ENCODE measurements at regions of chr14 and their contacts with region 1.

Region 1: DNA sequence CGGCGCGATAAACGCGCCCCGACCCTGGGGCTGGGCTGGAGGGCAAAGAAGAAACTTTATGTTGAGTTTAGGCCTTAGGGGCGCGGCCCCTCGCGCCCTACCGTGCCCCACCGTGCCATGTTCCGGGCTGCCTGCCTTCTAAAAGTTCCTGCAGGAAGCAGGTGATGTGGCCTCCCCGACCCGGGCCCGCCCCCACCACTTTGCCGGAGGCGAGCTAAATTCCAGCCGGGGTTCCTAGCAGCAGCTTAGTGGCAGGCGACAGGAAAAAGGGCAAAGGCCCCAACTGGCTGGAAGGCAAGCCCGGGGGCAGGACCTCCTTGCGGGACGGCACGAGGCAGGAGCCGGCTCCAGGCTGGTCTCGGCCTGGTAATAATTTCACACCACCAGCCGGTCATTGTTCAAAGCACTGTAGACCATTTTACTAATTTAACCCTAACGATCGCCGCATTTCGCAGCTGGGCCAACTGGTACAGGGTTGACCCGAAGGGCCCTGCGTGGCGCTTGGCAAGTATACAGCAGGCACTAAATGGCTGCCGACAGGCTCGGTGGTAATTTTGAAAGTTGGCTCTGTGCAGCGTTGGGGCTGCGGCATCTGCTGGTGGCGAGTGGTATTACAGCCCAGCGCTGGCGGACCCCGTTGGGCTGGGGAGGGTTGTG is 895 bp upstream of the CCDC88C start:
- DNase-seq: peak; percentile 84
- H3K4me3 Mint-ChIP-seq: peak overlapping the region; percentile 72
- H3K27ac Mint-ChIP-seq: peak overlapping the region; percentile 73
- H3K4me1 Mint-ChIP-seq: peaks cover 29% of the 10 kb centered on the region
- H3K27me3 Mint-ChIP-seq: peaks cover 8% of the 10 kb centered on the region

Region 2: DNA sequence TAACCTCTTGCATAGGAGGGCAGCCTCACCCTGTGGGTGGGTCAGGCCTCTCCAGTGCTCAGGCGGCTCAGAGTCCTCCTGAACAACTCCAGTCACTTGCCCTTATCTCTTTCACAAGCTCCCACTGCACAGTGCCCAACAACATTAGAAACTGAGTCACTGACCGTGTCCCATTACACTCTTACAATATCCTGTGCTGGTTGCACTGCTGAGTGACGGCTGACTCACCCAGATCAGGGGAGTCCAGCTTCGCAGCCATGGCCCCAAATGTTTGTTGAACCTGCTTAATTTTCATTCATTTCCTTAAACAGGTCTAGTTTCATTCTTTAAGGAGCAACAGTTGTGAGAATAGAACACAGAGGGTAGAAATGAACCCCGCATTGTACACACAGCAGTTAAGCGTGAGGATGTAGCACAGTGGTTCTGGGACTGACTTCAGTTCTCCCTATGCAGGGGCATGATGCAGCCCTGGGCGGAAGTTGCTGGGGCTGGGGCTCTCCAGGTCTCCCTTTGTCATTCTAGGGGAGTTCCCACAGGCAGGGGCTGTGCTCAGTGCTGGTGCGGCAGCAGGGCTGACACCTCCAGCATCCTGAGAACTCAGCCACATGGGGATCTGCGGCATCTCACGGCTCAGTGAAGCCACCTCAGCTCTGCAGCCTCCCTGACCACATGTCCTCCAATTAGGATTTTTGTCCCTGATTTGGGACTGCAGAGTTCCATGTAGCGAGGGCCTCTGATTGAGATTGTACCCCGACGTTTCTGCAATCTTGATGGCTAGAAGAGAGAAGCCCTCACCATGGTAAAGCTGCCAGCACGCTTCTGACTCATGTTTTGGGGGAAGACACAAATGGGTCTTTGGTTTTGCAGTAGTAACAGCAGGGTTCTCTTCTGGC is 190.2 kb before region 1 on chr14:
- CTCF ChIA-PET with region 1: no interaction called
- POLR2A ChIA-PET with region 1: interaction called, 11 read pairs
- DNase-seq: peak; percentile 88
- H3K4me3 Mint-ChIP-seq: peak overlapping the region; percentile 62
- H3K27ac Mint-ChIP-seq: peak overlapping the region; percentile 100
- H3K4me1 Mint-ChIP-seq: peaks cover 91% of the 10 kb centered on the region
- H3K27me3 Mint-ChIP-seq: no peaks in the 10 kb centered on the region

Region 3: GRCh38 chr14:91323671-91324605 is 94.6 kb before region 1 on chr14:
- CTCF ChIA-PET with region 1: interaction called, 105 read pairs
- POLR2A ChIA-PET with region 1: interaction called, 65 read pairs
- DNase-seq: peak; percentile 92
- H3K4me3 Mint-ChIP-seq: peak overlapping the region; percentile 76
- H3K27ac Mint-ChIP-seq: peak overlapping the region; percentile 99
- H3K4me1 Mint-ChIP-seq: peaks cover 64% of the 10 kb centered on the region
- H3K27me3 Mint-ChIP-seq: no peaks in the 10 kb centered on the region

Region 4: GRCh38 chr14:91367173-91368171 is 51.0 kb before region 1 on chr14:
- CTCF ChIA-PET with region 1: interaction called, 18 read pairs
- POLR2A ChIA-PET with region 1: interaction called, 135 read pairs
- DNase-seq: peak; percentile 63
- H3K4me3 Mint-ChIP-seq: peak overlapping the region; percentile 38
- H3K27ac Mint-ChIP-seq: peak overlapping the region; percentile 73
- H3K4me1 Mint-ChIP-seq: peaks cover 87% of the 10 kb centered on the region
- H3K27me3 Mint-ChIP-seq: no peaks in the 10 kb centered on the region

Region 5: GRCh38 chr14:91388551-91388975 is 30.0 kb before region 1 on chr14:
- CTCF ChIA-PET with region 1: interaction called, 10 read pairs
- POLR2A ChIA-PET with region 1: interaction called, 24 read pairs
- DNase-seq: peak; percentile 63
- H3K4me3 Mint-ChIP-seq: no peak overlapping the region
- H3K27ac Mint-ChIP-seq: peak overlapping the region; percentile 72
- H3K4me1 Mint-ChIP-seq: peaks cover 83% of the 10 kb centered on the region
- H3K27me3 Mint-ChIP-seq: no peaks in the 10 kb centered on the region

Region 6: GRCh38 chr14:91402771-91403600 is 15.5 kb before region 1 on chr14:
- CTCF ChIA-PET with region 1: interaction called, 35 read pairs
- POLR2A ChIA-PET with region 1: interaction called, 308 read pairs
- DNase-seq: no peak
- H3K4me3 Mint-ChIP-seq: peak overlapping the region; percentile 43
- H3K27ac Mint-ChIP-seq: peak overlapping the region; percentile 74
- H3K4me1 Mint-ChIP-seq: peaks cover 95% of the 10 kb centered on the region
- H3K27me3 Mint-ChIP-seq: no peaks in the 10 kb centered on the region

Region 7: GRCh38 chr14:91453744-91454143 is 35.2 kb after region 1 on chr14:
- CTCF ChIA-PET with region 1: no interaction called
- POLR2A ChIA-PET with region 1: no interaction called
- DNase-seq: no peak
- H3K4me3 Mint-ChIP-seq: no peak overlapping the region
- H3K27ac Mint-ChIP-seq: no peak overlapping the region
- H3K4me1 Mint-ChIP-seq: peaks cover 4% of the 10 kb centered on the region
- H3K27me3 Mint-ChIP-seq: peaks cover 3% of the 10 kb centered on the region

Measured in activated CD4-positive, alpha-beta memory T cell treated with anti-CD3 and anti-CD28 coated beads, Interleukin-2, amount 10 ng/mL, durations not matched to agents 7 days and 5 days (primary cell).